Panc1 (cell line): ENCODE measurements at regions of chr3 and their contacts with region 1.

Region 1: GRCh38 chr3:113495035-113495434 is 19.9 kb downstream of the SPICE1 start:
- DNase-seq: no peak
- ATAC-seq: peak; percentile 80
- H3K4me3 ChIP-seq: no peak overlapping the region
- H3K27ac ChIP-seq: no peak overlapping the region
- H3K4me1 ChIP-seq: no peaks in the 10 kb centered on the region
- H3K27me3 ChIP-seq: no peaks in the 10 kb centered on the region
- CTCF ChIP-seq: peak; percentile 59; the same call in 1 of the 2 replicates

Region 2: GRCh38 chr3:112473212-112473640 is 1021.8 kb before region 1 on chr3:
- CTCF ChIA-PET with region 1: no interaction called
- POLR2A ChIA-PET with region 1: no interaction called
- in situ Hi-C with region 1: no loop called
- intact Hi-C with region 1: no loop called
- DNase-seq: no peak
- ATAC-seq: no peak
- H3K4me3 ChIP-seq: no peak overlapping the region
- H3K27ac ChIP-seq: no peak overlapping the region
- H3K4me1 ChIP-seq: no peaks in the 10 kb centered on the region
- H3K27me3 ChIP-seq: no peaks in the 10 kb centered on the region
- CTCF ChIP-seq: no peak

Region 3: GRCh38 chr3:113287803-113288648 is 207.0 kb before region 1 on chr3:
- CTCF ChIA-PET with region 1: interaction called, 11 read pairs
- POLR2A ChIA-PET with region 1: no interaction called
- in situ Hi-C with region 1: no loop called
- intact Hi-C with region 1: no loop called
- DNase-seq: peak; percentile 87
- ATAC-seq: peak; percentile 67
- H3K4me3 ChIP-seq: no peak overlapping the region
- H3K27ac ChIP-seq: no peak overlapping the region
- H3K4me1 ChIP-seq: peaks cover 8% of the 10 kb centered on the region
- H3K27me3 ChIP-seq: peaks cover 8% of the 10 kb centered on the region; the same call in 1 of the 2 replicates
- CTCF ChIP-seq: peak; percentile 100

Region 4: GRCh38 chr3:113516115-113516505 is 21.1 kb after region 1 on chr3:
- CTCF ChIA-PET with region 1: interaction called, 16 read pairs
- POLR2A ChIA-PET with region 1: interaction called, 3 read pairs
- in situ Hi-C with region 1: no loop called
- intact Hi-C with region 1: no loop called
- DNase-seq: no peak
- ATAC-seq: no peak
- H3K4me3 ChIP-seq: peak overlapping the region; percentile 70 to 92
- H3K27ac ChIP-seq: no peak overlapping the region
- H3K4me1 ChIP-seq: peaks cover 6% of the 10 kb centered on the region; the same call in 1 of the 2 replicates
- H3K27me3 ChIP-seq: peaks cover 10% of the 10 kb centered on the region; the same call in 1 of the 2 replicates
- CTCF ChIP-seq: peak; percentile 49

Region 5: DNA sequence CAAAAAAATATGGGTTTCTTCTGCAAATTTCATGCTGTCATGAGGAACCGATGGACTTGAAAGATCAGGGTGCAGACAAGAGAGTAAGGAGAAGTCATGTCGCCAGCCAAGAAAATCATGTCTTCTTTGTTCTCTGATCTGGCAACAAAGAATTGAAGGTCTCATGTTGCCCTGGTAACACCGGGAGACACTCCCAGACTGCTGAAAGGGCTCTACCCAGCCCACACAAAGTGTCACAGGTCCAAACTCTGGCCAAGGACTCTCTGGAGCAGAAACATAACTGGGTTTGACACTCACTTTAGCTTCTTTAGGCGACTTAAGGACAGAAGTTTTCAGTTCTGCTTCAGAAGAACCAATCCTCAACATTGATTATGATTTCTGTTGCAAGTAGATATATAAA is 80.2 kb after region 1 on chr3:
- CTCF ChIA-PET with region 1: interaction called, 10 read pairs
- POLR2A ChIA-PET with region 1: no interaction called
- in situ Hi-C with region 1: no loop called
- intact Hi-C with region 1: loop called (anchors 1 kb)
- DNase-seq: no peak
- ATAC-seq: no peak
- H3K4me3 ChIP-seq: no peak overlapping the region
- H3K27ac ChIP-seq: no peak overlapping the region
- H3K4me1 ChIP-seq: no peaks in the 10 kb centered on the region
- H3K27me3 ChIP-seq: peaks cover 29% of the 10 kb centered on the region
- CTCF ChIP-seq: no peak

Region 6: DNA sequence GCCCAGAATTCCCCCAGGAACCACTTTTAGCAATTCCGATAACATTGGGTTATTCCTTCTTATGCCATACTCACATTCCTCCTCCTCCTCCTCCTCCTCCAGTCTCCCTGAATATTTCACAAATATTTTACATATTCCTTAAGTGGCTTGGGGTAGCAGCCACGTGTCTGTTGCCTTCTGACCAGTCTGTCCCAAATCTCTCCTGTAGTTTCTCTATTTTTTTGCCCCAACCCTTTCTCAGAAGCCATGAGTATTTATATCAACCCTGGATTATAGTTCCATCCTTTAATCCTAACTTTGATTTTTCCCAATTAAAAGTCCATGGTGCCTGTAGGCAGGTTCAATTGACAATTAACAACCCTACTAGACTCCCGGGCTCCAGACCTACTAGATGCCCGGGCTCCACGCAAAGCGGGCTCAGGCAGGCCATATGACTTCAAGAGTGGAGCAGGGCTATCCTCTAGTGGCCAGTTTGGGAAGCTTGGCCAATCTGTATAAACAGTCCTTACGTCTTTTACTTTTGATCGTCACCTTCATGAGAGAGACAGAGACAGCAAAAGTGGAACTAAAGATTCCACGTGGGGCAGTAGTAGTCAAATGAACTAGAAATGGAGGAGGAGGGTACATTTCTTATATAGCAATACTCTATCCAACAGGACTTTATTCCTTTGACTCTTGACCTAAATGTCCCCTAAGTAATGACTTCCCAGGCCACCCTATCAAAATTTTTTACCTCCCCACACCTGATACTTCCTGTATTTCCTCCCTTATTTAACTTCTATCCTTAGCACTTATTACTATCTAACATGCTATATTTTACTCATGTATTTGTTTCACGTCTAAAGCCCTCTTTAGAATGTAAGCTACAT is 131.7 kb after region 1 on chr3:
- CTCF ChIA-PET with region 1: interaction called, 3 read pairs
- POLR2A ChIA-PET with region 1: no interaction called
- in situ Hi-C with region 1: no loop called
- intact Hi-C with region 1: loop called (anchors 1 kb)
- DNase-seq: peak; percentile 45
- ATAC-seq: peak; percentile 98
- H3K4me3 ChIP-seq: no peak overlapping the region
- H3K27ac ChIP-seq: no peak overlapping the region
- H3K4me1 ChIP-seq: no peaks in the 10 kb centered on the region
- H3K27me3 ChIP-seq: peaks cover 2% of the 10 kb centered on the region; the same call in 1 of the 2 replicates
- CTCF ChIP-seq: peak; percentile 99

Region 7: DNA sequence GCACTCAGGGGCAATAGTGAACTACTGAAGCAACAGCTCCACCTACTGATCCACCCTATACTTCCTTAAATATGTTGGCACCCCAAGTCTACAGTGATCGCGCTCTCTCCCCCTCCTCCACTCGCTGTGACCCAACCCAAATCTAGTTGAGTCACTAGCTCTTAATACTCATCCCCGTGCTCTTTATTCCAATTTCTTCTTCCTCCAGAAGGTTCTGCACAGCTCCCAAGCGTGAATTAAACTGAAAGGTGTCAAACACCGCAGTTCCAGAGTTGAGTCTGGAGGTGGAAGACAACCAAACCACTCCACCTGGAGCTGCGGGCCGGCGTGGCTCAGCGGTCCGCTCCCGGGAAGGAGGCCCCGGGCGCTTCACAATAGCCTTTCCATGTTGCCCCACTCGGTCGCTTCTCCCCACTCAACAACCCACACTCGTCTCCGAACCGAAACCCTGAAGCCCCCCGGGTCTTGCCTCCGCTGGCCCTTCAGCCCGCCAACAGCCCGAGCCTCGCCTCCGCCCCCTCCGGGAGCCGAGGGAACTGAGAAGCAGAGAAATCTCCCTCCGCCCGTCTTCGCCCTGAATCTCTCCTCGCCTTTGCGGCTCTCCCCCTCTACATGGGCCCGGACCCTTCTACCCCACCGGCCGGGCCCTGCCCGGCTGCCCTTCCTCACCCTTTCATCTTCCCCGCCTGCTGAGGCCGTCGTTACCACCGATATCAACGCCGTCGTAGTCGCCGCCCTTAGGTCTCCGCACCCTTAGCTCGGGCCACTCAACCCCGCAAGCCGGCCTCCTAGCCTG is 250.4 kb after region 1 on chr3:
- CTCF ChIA-PET with region 1: no interaction called
- POLR2A ChIA-PET with region 1: no interaction called
- in situ Hi-C with region 1: no loop called
- intact Hi-C with region 1: loop called (anchors 10 kb)
- DNase-seq: peak; percentile 84
- ATAC-seq: peak; percentile 74
- H3K4me3 ChIP-seq: peak overlapping the region; percentile 97 to 99
- H3K27ac ChIP-seq: peak overlapping the region; percentile 100
- H3K4me1 ChIP-seq: peaks cover 52% of the 10 kb centered on the region
- H3K27me3 ChIP-seq: no peaks in the 10 kb centered on the region
- CTCF ChIP-seq: peak; percentile 88

Region 8: GRCh38 chr3:113878403-113878802 is 383.4 kb after region 1 on chr3:
- CTCF ChIA-PET with region 1: no interaction called
- POLR2A ChIA-PET with region 1: interaction called, 11 read pairs
- in situ Hi-C with region 1: no loop called
- intact Hi-C with region 1: no loop called
- DNase-seq: no peak
- ATAC-seq: no peak
- H3K4me3 ChIP-seq: no peak overlapping the region
- H3K27ac ChIP-seq: no peak overlapping the region
- H3K4me1 ChIP-seq: no peaks in the 10 kb centered on the region
- H3K27me3 ChIP-seq: no peaks in the 10 kb centered on the region
- CTCF ChIP-seq: no peak